ENCODE measurements at regions of chr3 and their contacts with region 1.

Region 1: GRCh38 chr3:175792245-175792956 is 933.3 kb downstream of the NAALADL2 start:
- DNase-seq: no peak
- ATAC-seq: no peak
- H3K4me3 ChIP-seq: no peak overlapping the region
- H3K4me3 Mint-ChIP-seq: no peak overlapping the region
- H3K27ac ChIP-seq: no peak overlapping the region
- H3K27ac Mint-ChIP-seq: no peak overlapping the region
- H3K4me1 ChIP-seq: no peaks in the 10 kb centered on the region
- H3K4me1 Mint-ChIP-seq: no peaks in the 10 kb centered on the region
- H3K27me3 ChIP-seq: no peaks in the 10 kb centered on the region
- H3K27me3 Mint-ChIP-seq: no peaks in the 10 kb centered on the region

Region 2: DNA sequence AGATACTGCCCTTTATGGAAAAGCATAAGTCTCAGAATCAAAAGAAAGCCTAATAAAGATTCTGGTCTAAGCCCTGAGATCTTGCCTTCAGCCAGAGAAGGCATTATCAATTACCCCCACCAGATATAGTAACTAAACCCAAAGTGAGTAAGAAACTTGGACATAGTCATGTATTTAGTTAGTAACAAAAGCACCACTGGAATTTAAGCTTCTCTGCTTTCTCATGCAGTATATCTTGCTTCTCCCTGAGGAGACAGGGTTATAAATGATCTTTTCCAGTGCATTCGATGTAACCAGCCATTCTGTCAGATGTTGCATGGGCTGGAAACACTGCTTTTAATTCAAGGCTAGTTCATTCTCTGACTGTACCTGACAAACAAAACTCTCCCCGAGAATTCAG is 13.4 kb after region 1 on chr3:
- CTCF ChIA-PET with region 1: interaction called in 1 of 2 experiments, 17 read pairs
- POLR2A ChIA-PET with region 1: no interaction called
- DNase-seq: no peak
- ATAC-seq: no peak
- H3K4me3 ChIP-seq: no peak overlapping the region
- H3K4me3 Mint-ChIP-seq: no peak overlapping the region
- H3K27ac ChIP-seq: no peak overlapping the region
- H3K27ac Mint-ChIP-seq: no peak overlapping the region
- H3K4me1 ChIP-seq: no peaks in the 10 kb centered on the region
- H3K4me1 Mint-ChIP-seq: no peaks in the 10 kb centered on the region
- H3K27me3 ChIP-seq: no peaks in the 10 kb centered on the region
- H3K27me3 Mint-ChIP-seq: no peaks in the 10 kb centered on the region

Measured in T-cell (primary cell).